ENCODE measurements at regions of chr1 and their contacts with region 1.

Region 1: DNA sequence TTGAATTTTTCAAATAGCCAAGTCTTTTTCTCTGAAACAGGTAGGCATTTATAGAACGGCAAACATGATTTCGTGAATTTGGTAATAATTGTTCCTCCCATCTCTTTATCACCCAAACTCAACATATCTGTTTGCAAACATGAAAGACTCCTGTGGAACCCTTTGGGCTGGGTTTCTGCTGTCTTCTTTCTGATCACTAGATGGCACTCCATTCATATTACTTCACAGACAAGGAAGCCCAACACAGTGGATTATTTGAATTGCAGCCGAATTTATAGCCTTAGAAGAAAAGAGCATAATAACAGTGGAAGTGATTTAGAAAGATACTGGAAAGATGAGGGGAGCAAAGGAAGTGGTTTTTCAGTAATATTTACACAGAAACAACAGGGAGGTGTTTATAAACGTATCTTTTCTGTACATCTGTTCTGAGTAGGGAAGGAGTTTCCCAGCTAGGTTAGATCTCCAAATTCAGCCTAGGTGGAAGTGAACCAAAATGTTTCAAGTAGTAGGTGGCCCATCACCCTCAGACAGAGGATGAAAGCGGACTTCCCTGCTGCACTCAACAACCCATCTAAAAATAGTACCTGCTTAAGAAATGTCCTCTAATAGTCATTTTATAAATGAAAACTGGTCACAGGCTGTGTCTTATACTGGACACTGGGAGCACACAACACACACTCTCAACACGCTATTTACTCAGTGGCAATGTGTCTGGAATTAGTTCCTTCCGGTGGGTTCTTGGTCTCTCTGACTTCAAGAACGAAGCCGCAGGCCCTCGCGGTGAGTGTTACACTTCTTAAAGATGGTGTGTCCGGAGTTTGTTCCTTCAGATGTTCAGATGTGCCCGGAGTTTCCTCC is 67.6 kb downstream of the MAP3K21 start:
- DNase-seq: peak; percentile 37
- ATAC-seq: peak; percentile 33
- H3K4me3 ChIP-seq: no peak overlapping the region
- H3K4me3 Mint-ChIP-seq: no peak overlapping the region
- H3K27ac ChIP-seq: no peak overlapping the region
- H3K27ac Mint-ChIP-seq: no peak overlapping the region
- H3K4me1 ChIP-seq: no peaks in the 10 kb centered on the region
- H3K4me1 Mint-ChIP-seq: no peaks in the 10 kb centered on the region
- H3K27me3 ChIP-seq: peaks cover 0 to 9% (median 6%) of the 10 kb centered on the region in 4 experiments
- H3K27me3 Mint-ChIP-seq: peaks cover 42% of the 10 kb centered on the region
- CTCF ChIP-seq: peak; percentile 73

Region 2: GRCh38 chr1:233448109-233448689 is 53.1 kb after region 1 on chr1:
- CTCF ChIA-PET with region 1: no interaction called
- POLR2A ChIA-PET with region 1: no interaction called
- intact Hi-C with region 1: no loop called
- DNase-seq: no peak
- ATAC-seq: no peak
- H3K4me3 ChIP-seq: no peak overlapping the region
- H3K4me3 Mint-ChIP-seq: no peak overlapping the region
- H3K27ac ChIP-seq: no peak overlapping the region
- H3K27ac Mint-ChIP-seq: no peak overlapping the region
- H3K4me1 ChIP-seq: no peaks in the 10 kb centered on the region
- H3K4me1 Mint-ChIP-seq: no peaks in the 10 kb centered on the region
- H3K27me3 ChIP-seq: no peaks in the 10 kb centered on the region
- H3K27me3 Mint-ChIP-seq: no peaks in the 10 kb centered on the region
- CTCF ChIP-seq: no peak

Region 3: GRCh38 chr1:233790662-233791375 is 395.7 kb after region 1 on chr1:
- CTCF ChIA-PET with region 1: interaction called, 3 read pairs
- POLR2A ChIA-PET with region 1: no interaction called
- intact Hi-C with region 1: loop called (anchors 10 kb)
- DNase-seq: peak; percentile 58
- ATAC-seq: peak; percentile 63
- H3K4me3 ChIP-seq: no peak overlapping the region
- H3K4me3 Mint-ChIP-seq: no peak overlapping the region
- H3K27ac ChIP-seq: no peak overlapping the region
- H3K27ac Mint-ChIP-seq: no peak overlapping the region
- H3K4me1 ChIP-seq: no peaks in the 10 kb centered on the region
- H3K4me1 Mint-ChIP-seq: no peaks in the 10 kb centered on the region
- H3K27me3 ChIP-seq: no peaks in the 10 kb centered on the region
- H3K27me3 Mint-ChIP-seq: peaks cover 18% of the 10 kb centered on the region
- CTCF ChIP-seq: peak; percentile 90

Region 4: GRCh38 chr1:234065794-234066447 is 670.8 kb after region 1 on chr1:
- CTCF ChIA-PET with region 1: interaction called, 5 read pairs
- POLR2A ChIA-PET with region 1: no interaction called
- intact Hi-C with region 1: loop called (anchors 2 kb)
- DNase-seq: peak; percentile 63
- ATAC-seq: no peak
- H3K4me3 ChIP-seq: no peak overlapping the region
- H3K4me3 Mint-ChIP-seq: no peak overlapping the region
- H3K27ac ChIP-seq: no peak overlapping the region
- H3K27ac Mint-ChIP-seq: no peak overlapping the region
- H3K4me1 ChIP-seq: peaks cover 0 to 3% of the 10 kb centered on the region in 2 donors
- H3K4me1 Mint-ChIP-seq: no peaks in the 10 kb centered on the region
- H3K27me3 ChIP-seq: peaks cover 0 to 3% (median 0%) of the 10 kb centered on the region in 4 experiments
- H3K27me3 Mint-ChIP-seq: peaks cover 5% of the 10 kb centered on the region
- CTCF ChIP-seq: peak; percentile 89

Measured in B cell (primary cell).